Motor neuron (in vitro differentiated cells): ENCODE measurements at regions of chr2 and their contacts with region 1.

Region 1: GRCh38 chr2:33552758-33553461 is 46.2 kb downstream of the FAM98A start:
- ATAC-seq: peak in 4 of 8 experiments; percentile 20 to 76 (median 38)
- H3K4me3 ChIP-seq: no peak overlapping the region
- H3K27ac ChIP-seq: no peak overlapping the region
- H3K4me1 ChIP-seq: no peaks in the 10 kb centered on the region

Region 2: GRCh38 chr2:32937602-32938448 is 615.1 kb before region 1 on chr2:
- in situ Hi-C with region 1: no loop called
- ATAC-seq: peak in 3 of 8 experiments; percentile 52 to 84 (median 68)
- H3K4me3 ChIP-seq: no peak overlapping the region
- H3K27ac ChIP-seq: no peak overlapping the region
- H3K4me1 ChIP-seq: no peaks in the 10 kb centered on the region

Region 3: DNA sequence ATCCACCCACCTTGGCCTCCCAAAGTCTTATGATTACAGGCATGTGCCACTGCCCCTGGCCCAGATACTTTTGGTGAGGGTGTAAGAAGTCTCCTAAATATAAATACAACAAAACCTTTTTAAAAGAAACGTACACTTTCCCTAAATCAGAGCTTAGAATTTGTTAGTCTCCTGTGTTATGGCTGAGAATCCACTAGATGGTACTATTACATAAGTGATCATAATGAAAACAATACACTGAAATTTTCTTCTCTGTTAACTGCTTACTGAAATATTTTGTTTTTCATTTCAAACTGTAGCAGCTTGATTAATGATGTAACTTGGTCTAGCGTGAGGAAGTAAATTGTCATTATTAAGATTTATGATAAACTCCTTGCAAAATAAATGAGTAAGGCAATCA is 121.0 kb after region 1 on chr2:
- in situ Hi-C with region 1: loop called in 1 of 9 experiments (anchors 25 kb)
- ATAC-seq: peak in 4 of 8 experiments; percentile 41 to 71 (median 66)
- H3K4me3 ChIP-seq: no peak overlapping the region
- H3K27ac ChIP-seq: no peak overlapping the region
- H3K4me1 ChIP-seq: peaks cover 5 to 9% of the 10 kb centered on the region in 2 donors

Region 4: GRCh38 chr2:34979148-34979547 is 1426.2 kb after region 1 on chr2:
- in situ Hi-C with region 1: no loop called
- ATAC-seq: peak in 1 of 8 experiments; percentile 29
- H3K4me3 ChIP-seq: no peak overlapping the region
- H3K27ac ChIP-seq: no peak overlapping the region
- H3K4me1 ChIP-seq: no peaks in the 10 kb centered on the region